Heart left ventricle (tissue), 16 donors: ENCODE measurements at regions of chr17 and their contacts with region 1.

Region 1: DNA sequence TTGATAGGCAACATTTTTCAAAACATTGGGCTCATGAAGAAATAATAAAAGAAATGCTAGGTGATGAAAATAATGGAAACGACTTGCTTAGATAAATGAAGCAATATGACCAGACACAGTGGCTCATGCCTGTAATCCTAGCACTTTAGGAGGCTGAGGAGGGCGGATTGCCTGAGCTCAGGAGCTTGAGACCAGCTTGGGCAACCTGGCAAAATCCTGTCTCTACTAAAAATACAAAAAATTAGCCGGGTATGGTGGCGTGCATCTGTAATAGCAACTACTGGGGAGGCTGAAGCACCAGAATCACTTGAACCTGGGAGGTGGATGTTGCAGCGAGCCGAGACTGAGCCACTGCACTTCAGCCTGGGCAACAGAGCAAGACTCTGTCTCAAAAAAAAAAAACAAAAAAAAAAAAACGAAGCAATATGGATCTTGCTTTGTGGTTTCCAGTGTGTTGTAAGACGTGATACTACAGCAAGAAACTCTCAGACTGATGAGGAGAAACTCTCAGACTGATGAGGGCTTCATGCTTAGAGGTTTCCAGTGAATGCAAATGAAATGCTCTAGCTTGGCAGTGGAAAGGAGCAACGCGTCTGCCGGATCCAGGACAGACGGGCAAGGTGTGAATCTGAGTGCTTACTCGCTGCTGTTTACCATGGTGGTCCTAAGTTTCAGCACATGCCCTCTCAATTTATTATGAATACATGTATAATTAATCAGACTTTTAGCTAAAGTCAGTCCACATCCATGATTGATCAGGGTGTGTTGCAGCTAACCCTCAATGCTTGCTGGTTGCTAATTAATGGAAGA is 11.5 kb upstream of the IGF2BP1 start:
- DNase-seq: no peak
- ATAC-seq: no peak
- H3K4me3 ChIP-seq: no peak overlapping the region
- H3K27ac ChIP-seq: no peak overlapping the region
- H3K4me1 ChIP-seq: no peaks in the 10 kb centered on the region
- H3K27me3 ChIP-seq: peaks cover 3 to 85% (median 45%) of the 10 kb centered on the region in 9 donors
- CTCF ChIP-seq: no peak
- POLR2A ChIP-seq: no peak

Region 2: DNA sequence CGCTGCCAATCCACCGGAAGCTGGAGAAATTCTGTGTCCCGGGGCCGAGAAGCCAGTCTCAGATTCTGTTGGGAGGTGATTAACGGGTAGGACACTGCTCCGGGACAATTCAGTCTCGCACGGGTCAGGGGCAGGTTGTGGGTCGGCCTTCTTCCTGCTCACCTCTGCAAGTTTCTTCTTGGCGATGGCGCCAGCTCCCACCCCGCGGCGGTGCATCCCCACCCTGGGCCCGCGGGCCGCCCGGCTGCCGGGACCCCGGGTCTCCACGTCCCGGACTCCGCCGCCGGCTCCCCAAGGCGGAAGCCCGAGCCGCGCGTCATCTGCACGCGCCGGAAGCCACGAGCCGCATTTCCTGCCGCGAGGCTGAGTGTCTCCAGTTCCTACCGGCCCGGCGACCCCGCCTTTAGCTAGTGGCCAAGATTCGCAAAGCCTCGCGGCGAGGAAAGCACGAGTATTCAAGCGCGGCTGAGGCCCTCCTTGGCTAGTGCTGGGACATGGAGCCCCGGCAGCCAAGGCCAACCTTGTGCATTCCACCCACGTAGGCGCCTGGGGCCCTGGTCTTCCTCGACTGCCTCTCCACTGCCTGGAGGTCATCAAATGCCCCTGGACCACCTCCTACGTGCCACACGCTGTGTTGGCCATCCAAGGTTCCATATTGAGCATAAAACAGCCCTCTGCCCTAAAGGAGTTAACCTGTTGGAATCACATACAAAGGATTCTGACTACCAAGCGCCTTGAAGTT is 41.0 kb before region 1 on chr17 and contains the start of gene SNF8:
- intact Hi-C with region 1: no loop called
- DNase-seq: peak; percentile 89 to 95 (median 92)
- ATAC-seq: peak; percentile 94 to 99 (median 98)
- H3K4me3 ChIP-seq: peak within 1 kb of the TSS; percentile 43 to 99 (median 90)
- H3K27ac ChIP-seq: peak within 1 kb of the TSS; percentile 57 to 95 (median 86)
- H3K4me1 ChIP-seq: peaks cover 3 to 29% (median 16%) of the 10 kb centered on the region in 12 donors
- H3K27me3 ChIP-seq: peaks cover 0 to 6% (median 0%) of the 10 kb centered on the region in 9 donors
- CTCF ChIP-seq: no peak
- POLR2A ChIP-seq: peak in 1 of 2 donors; percentile 84
- total RNA-seq, gene SNF8: 66.9 to 122 (median 96.1) TPM

Region 3: DNA sequence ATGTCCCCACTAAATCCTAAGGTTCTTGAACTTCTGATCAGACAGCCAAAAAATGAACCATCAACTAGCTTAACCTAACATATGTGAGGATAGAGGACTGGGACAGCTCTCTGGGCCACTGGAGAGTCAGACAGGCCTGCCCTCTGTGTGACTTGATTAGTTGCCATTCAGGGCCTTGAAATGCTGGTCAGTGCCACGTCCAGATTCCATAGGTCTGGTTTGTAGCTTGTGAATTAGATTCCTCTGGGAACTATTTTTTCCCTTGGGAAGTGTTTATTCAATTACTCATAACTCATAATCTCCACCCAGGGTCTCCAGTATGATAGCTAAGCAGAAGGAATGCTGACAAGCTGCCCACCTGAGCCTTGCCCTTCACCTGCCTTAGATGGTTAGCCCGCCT is 59.7 kb after region 1 on chr17:
- intact Hi-C with region 1: loop called in 1 of 10 experiments (anchors 10 kb)
- DNase-seq: no peak
- ATAC-seq: no peak
- H3K4me3 ChIP-seq: no peak overlapping the region
- H3K27ac ChIP-seq: no peak overlapping the region
- H3K4me1 ChIP-seq: no peaks in the 10 kb centered on the region
- H3K27me3 ChIP-seq: peaks cover 0 to 12% (median 0%) of the 10 kb centered on the region in 9 donors
- CTCF ChIP-seq: no peak
- POLR2A ChIP-seq: no peak